AG04450 (cell line): ENCODE measurements at regions of chr2 and their contacts with region 1.

Region 1: DNA sequence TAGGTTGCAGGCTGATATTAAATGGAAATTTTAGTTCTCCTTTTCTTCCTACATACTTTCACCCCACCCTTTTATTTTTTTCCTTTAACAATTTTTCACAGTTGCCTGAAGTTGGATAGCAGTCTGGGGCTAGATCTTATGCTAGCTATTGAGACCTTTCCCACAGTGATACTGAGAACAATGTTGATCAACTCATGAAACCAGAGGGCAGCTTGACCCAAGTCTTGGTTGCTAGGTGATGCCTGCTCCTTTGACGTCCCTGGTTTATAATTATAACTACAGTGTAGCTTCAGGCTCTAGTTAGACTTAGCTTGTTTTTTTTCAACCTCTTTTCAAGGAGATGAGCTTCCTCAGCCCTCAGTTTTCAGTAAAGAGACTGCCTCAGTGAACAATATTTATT is 648.5 kb downstream of the IRS1 start:
- DNase-seq: no peak
- H3K4me3 ChIP-seq: no peak overlapping the region
- H3K27ac ChIP-seq: no peak overlapping the region
- H3K27me3 ChIP-seq: no peaks in the 10 kb centered on the region
- CTCF ChIP-seq: no peak

Region 2: GRCh38 chr2:226179012-226179411 is 27.9 kb after region 1 on chr2:
- CTCF ChIA-PET with region 1: no interaction called
- POLR2A ChIA-PET with region 1: no interaction called
- DNase-seq: no peak
- H3K4me3 ChIP-seq: no peak overlapping the region
- H3K27ac ChIP-seq: no peak overlapping the region
- H3K27me3 ChIP-seq: no peaks in the 10 kb centered on the region
- CTCF ChIP-seq: no peak

Region 3: DNA sequence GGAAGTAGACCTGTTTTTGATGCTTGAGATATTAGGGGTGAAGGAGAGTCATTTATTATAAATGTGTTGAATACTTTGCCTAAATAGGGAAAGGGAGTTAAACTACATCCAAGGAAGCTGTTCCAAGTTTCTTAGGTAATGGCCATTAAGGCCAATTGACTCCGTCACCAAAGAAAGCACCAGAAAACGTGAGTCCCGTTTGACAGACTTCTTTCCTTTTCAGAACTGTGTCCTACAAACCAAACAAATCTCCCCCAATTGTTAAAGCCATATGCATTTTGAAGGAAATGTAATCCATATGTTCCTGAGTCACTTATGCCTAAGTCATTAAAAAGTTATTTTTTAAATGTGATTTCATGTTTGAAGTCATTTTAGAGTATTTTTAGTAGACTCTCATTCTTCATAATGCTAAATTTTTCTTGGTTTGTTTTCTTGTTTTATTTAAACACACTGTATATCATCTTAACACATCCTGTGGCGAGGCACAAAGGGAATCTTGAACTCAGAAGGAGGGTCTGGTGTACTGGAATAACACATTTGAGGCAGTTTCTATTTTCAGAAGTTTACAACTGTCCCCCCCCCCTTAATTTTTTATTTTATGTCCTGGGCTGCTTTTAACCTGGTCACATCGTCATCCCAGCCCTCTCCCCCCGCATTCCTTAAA is 818.4 kb after region 1 on chr2:
- CTCF ChIA-PET with region 1: interaction called, 12 read pairs
- POLR2A ChIA-PET with region 1: no interaction called
- DNase-seq: no peak
- H3K4me3 ChIP-seq: no peak overlapping the region
- H3K27ac ChIP-seq: no peak overlapping the region
- H3K27me3 ChIP-seq: no peaks in the 10 kb centered on the region
- CTCF ChIP-seq: no peak